ENCODE measurements at regions of chr1 and their contacts with region 1.

Region 1: DNA sequence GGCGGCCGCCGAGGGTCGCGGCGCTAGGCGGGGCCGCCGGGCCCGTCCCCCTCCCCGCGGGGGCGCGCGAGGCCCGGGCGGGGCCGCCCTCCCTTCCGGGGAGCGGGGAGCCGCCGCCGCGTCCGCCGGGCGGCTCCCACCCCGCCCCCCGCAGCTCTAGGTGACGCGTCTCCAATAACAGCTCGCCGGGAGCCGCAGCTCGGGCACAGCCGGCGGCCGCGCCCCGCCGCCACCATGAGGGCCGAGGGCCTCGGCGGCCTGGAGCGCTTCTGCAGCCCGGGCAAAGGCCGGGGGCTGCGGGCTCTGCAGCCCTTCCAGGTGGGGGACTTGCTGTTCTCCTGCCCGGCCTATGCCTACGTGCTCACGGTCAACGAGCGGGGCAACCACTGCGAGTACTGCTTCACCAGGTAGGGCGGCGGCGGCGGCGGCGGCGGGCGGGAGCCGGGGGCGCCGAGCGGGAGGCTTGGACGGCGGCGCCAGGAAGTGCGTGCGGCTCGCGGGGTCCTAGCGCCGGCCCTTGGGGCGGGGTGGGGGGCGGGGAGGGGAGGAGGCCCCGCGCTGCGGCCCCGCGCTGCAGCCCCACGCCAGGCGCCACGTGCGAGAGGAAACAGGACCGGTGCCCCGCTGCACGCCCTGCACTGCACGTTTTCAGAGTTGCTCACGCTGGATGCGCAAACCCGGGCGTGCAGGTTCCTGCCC is at the start of gene SMYD2:
- DNase-seq: peak; percentile 59 to 69
- ATAC-seq: peak; percentile 83 to 87
- H3K4me3 ChIP-seq: peak within 1 kb of the TSS; percentile 71 to 94 (median 83)
- H3K27ac ChIP-seq: peak within 1 kb of the TSS; percentile 90 to 98 (median 94)
- H3K4me1 ChIP-seq: peaks cover 15 to 19% of the 10 kb centered on the region in 2 donors
- H3K27me3 ChIP-seq: no peaks in the 10 kb centered on the region
- CTCF ChIP-seq: no peak
- POLR2A ChIP-seq: peak; percentile 90 to 96
- total RNA-seq, gene SMYD2: 57.2 to 112 (median 80.4) TPM

Region 2: GRCh38 chr1:214316593-214316992 is 35.4 kb after region 1 on chr1:
- in situ Hi-C with region 1: no loop called
- intact Hi-C with region 1: loop called (anchors 5 kb)
- DNase-seq: peak; percentile 45 to 72
- ATAC-seq: peak; percentile 89 to 93
- H3K4me3 ChIP-seq: no peak overlapping the region
- H3K27ac ChIP-seq: peak overlapping the region; percentile 44 to 84 (median 72)
- H3K4me1 ChIP-seq: peaks cover 40 to 48% of the 10 kb centered on the region in 2 donors
- H3K27me3 ChIP-seq: no peaks in the 10 kb centered on the region
- CTCF ChIP-seq: no peak
- POLR2A ChIP-seq: no peak

Region 3: GRCh38 chr1:214337511-214337910 is 56.3 kb after region 1 on chr1:
- in situ Hi-C with region 1: no loop called
- intact Hi-C with region 1: no loop called
- DNase-seq: no peak
- ATAC-seq: no peak
- H3K4me3 ChIP-seq: no peak overlapping the region
- H3K27ac ChIP-seq: peak overlapping the region in 3 of 4 donors; percentile 10 to 54 (median 50)
- H3K4me1 ChIP-seq: peaks cover 21 to 31% of the 10 kb centered on the region in 2 donors
- H3K27me3 ChIP-seq: no peaks in the 10 kb centered on the region
- CTCF ChIP-seq: no peak
- POLR2A ChIP-seq: no peak

Measured in gastrocnemius medialis (tissue), 4 donors.